Activated T-helper 1 cell treated with anti-CD3 and anti-CD28 coated beads, Interleukin-12 subunit alpha, Interleukin-12 subunit beta, Interleukin-2, Interleukin-4 antibody, amounts not matched to agents 30 ng/mL and 10 ng/mL and 1 ng/mL, durations not matched to agents 14 hours and 24 hours and 36 hours (primary cell): ENCODE measurements at regions of chr19 and their contacts with region 1.

Region 1: GRCh38 chr19:17470068-17470841 is at the start of gene SLC27A1:
- DNase-seq: peak; percentile 81
- H3K4me3 Mint-ChIP-seq: peak within 1 kb of the TSS; percentile 89
- H3K27ac Mint-ChIP-seq: peak within 1 kb of the TSS; percentile 78
- H3K4me1 Mint-ChIP-seq: peaks cover 30% of the 10 kb centered on the region
- H3K27me3 Mint-ChIP-seq: peaks cover 28% of the 10 kb centered on the region
- total RNA-seq, gene SLC27A1: 1.7 and 2.0 TPM in 2 replicates

Region 2: GRCh38 chr19:17336872-17337722 is 133.2 kb before region 1 on chr19 and contains the start of gene GTPBP3:
- intact Hi-C with region 1: loop called (anchors 1 kb)
- DNase-seq: peak; percentile 95
- H3K4me3 Mint-ChIP-seq: peak within 1 kb of the TSS; percentile 87
- H3K27ac Mint-ChIP-seq: peak within 1 kb of the TSS; percentile 88
- H3K4me1 Mint-ChIP-seq: peaks cover 21% of the 10 kb centered on the region
- H3K27me3 Mint-ChIP-seq: peaks cover 2% of the 10 kb centered on the region
- total RNA-seq, gene GTPBP3: 64.2 and 72.0 TPM in 2 replicates

Region 3: DNA sequence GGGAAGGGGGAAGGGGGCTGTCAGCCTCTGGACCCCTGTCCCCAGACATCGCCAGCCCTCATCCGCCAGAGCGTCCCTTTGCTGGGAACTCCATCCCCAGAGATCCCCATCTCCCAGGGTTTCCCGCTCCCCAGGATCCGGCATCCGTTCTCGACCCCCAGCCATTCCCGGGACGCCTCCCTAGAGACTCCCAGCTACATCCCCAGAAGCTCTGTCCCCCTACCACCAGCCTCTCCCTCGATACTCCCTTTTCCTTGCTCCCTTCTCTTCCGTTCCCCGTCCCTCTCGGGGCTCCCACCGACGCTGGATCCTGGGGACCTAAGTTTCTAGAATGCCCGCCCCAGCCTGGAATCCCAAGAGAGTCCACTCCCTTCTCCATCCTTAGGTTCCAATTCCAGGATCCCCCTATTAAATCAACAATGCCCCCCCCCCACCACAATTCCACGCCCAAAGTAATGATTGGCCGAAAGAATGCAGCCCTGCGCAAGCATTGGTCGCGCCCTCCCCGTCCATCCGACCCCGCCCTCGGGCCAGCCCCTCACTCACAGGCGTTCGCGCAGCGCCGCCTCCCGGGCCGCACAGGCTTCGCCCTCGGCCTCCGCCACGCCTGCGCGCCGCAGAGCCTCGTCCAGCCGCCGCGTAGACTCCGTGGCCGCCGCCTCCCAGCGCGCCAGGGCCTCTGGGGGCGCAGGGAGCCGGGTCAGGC is 79.4 kb before region 1 on chr19:
- intact Hi-C with region 1: loop called (anchors 1 kb)
- DNase-seq: peak; percentile 88
- H3K4me3 Mint-ChIP-seq: peak overlapping the region; percentile 90
- H3K27ac Mint-ChIP-seq: peak overlapping the region; percentile 29
- H3K4me1 Mint-ChIP-seq: peaks cover 20% of the 10 kb centered on the region
- H3K27me3 Mint-ChIP-seq: peaks cover 21% of the 10 kb centered on the region

Region 4: GRCh38 chr19:17419621-17420466 is 50.4 kb before region 1 on chr19 and contains the start of gene MVB12A:
- intact Hi-C with region 1: loop called (anchors 1 kb)
- DNase-seq: peak; percentile 95
- H3K4me3 Mint-ChIP-seq: peak within 1 kb of the TSS; percentile 94
- H3K27ac Mint-ChIP-seq: peak within 1 kb of the TSS; percentile 94
- H3K4me1 Mint-ChIP-seq: peaks cover 17% of the 10 kb centered on the region
- H3K27me3 Mint-ChIP-seq: no peaks in the 10 kb centered on the region
- total RNA-seq, gene MVB12A: 40.8 and 42.7 TPM in 2 replicates

Region 5: GRCh38 chr19:17448131-17448967 is 21.9 kb before region 1 on chr19 and contains the start of gene TMEM221:
- intact Hi-C with region 1: loop called (anchors 1 kb)
- DNase-seq: peak; percentile 28
- H3K4me3 Mint-ChIP-seq: no peak within 1 kb of the TSS
- H3K27ac Mint-ChIP-seq: no peak within 1 kb of the TSS
- H3K4me1 Mint-ChIP-seq: peaks cover 13% of the 10 kb centered on the region
- H3K27me3 Mint-ChIP-seq: peaks cover 14% of the 10 kb centered on the region
- total RNA-seq, gene TMEM221: not detected in 2 replicates

Region 6: DNA sequence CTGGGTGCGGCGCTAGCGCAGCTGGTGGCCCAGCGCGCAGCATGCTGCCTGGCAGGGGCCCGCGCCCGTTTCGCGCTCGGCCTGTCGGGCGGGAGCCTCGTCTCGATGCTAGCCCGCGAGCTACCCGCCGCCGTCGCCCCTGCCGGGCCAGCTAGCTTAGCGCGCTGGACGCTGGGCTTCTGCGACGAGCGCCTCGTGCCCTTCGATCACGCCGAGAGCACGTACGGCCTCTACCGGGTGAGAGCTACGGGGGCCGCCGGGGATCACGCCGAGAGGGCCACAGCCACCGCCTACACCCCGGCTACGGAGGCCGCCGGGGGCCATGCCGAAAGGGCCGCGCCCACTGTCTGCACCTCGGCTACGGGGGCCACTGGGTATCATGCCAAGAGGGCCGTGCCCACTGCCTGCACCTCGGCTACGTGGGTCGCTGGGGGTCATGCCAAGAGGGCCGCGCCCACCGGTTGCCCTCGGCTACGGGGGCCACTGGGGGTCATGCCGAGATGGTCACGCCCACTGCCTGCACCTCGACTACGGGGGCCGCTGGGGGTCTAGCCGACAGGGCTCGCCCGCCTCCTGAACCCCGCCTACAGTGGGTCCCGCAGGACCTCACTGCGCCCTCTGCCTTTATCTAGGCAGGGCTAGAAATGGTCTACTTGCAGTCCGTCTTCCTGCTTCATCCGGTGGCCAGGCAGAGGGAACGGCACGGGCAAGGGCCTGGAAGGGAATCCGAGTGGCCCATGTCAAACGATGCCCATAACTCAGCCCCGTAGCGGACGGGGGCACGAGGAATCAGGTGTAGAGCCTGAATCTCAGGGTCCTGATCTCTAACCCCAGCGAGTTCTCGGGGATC is 41.7 kb after region 1 on chr19:
- intact Hi-C with region 1: loop called (anchors 1 kb)
- DNase-seq: peak; percentile 75
- H3K4me3 Mint-ChIP-seq: peak overlapping the region; percentile 99
- H3K27ac Mint-ChIP-seq: peak overlapping the region; percentile 79
- H3K4me1 Mint-ChIP-seq: peaks cover 28% of the 10 kb centered on the region
- H3K27me3 Mint-ChIP-seq: no peaks in the 10 kb centered on the region

Region 7: DNA sequence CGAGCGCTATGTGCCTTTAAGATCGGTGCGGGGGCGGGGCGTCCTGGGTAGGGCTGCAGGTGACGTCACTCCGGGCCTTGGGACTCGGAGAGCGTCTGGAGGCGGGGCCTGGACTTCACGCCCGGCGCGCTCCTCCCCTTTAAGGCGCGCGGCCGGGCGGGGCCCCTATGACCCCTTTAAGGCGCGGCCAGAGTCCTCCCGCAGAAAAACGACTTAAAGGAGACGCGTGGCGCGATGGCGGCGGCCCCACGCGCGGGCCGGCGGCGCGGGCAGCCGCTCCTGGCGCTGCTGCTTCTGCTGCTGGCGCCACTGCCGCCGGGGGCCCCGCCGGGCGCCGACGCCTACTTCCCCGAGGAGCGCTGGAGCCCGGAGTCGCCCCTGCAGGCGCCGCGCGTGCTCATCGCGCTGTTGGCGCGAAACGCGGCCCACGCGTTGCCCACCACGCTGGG is 85.2 kb after region 1 on chr19 and contains the start of gene COLGALT1:
- intact Hi-C with region 1: loop called (anchors 5 kb)
- DNase-seq: peak; percentile 97
- H3K4me3 Mint-ChIP-seq: peak within 1 kb of the TSS; percentile 86
- H3K27ac Mint-ChIP-seq: peak within 1 kb of the TSS; percentile 70
- H3K4me1 Mint-ChIP-seq: peaks cover 15% of the 10 kb centered on the region
- H3K27me3 Mint-ChIP-seq: no peaks in the 10 kb centered on the region
- total RNA-seq, gene COLGALT1: 115 and 117 TPM in 2 replicates